ENCODE measurements at regions of chr3 and their contacts with region 1.

Region 1: GRCh38 chr3:42581709-42582473 is at the start of gene SEC22C:
- DNase-seq: peak; percentile 98
- ATAC-seq: peak; percentile 94
- H3K4me3 Mint-ChIP-seq: peak within 1 kb of the TSS; percentile 81
- H3K27ac Mint-ChIP-seq: peak within 1 kb of the TSS; percentile 94
- H3K4me1 Mint-ChIP-seq: peaks cover 43% of the 10 kb centered on the region
- H3K27me3 Mint-ChIP-seq: no peaks in the 10 kb centered on the region
- total RNA-seq, gene SEC22C: 34.2 to 42.5 TPM

Region 2: GRCh38 chr3:40800343-40800742 is 1781.5 kb before region 1 on chr3:
- CTCF ChIA-PET with region 1: no interaction called
- POLR2A ChIA-PET with region 1: no interaction called
- intact Hi-C with region 1: no loop called
- DNase-seq: no peak
- ATAC-seq: no peak
- H3K4me3 Mint-ChIP-seq: no peak overlapping the region
- H3K27ac Mint-ChIP-seq: no peak overlapping the region
- H3K4me1 Mint-ChIP-seq: no peaks in the 10 kb centered on the region
- H3K27me3 Mint-ChIP-seq: peaks cover 15% of the 10 kb centered on the region

Region 3: GRCh38 chr3:42345811-42346210 is 236.1 kb before region 1 on chr3:
- CTCF ChIA-PET with region 1: no interaction called
- POLR2A ChIA-PET with region 1: no interaction called
- intact Hi-C with region 1: no loop called
- DNase-seq: peak; percentile 31
- ATAC-seq: peak; percentile 39
- H3K4me3 Mint-ChIP-seq: no peak overlapping the region
- H3K27ac Mint-ChIP-seq: no peak overlapping the region
- H3K4me1 Mint-ChIP-seq: peaks cover 25% of the 10 kb centered on the region
- H3K27me3 Mint-ChIP-seq: no peaks in the 10 kb centered on the region

Region 4: GRCh38 chr3:42539869-42540714 is 41.8 kb before region 1 on chr3:
- CTCF ChIA-PET with region 1: no interaction called
- POLR2A ChIA-PET with region 1: no interaction called
- intact Hi-C with region 1: no loop called
- DNase-seq: peak; percentile 78
- ATAC-seq: peak; percentile 73
- H3K4me3 Mint-ChIP-seq: no peak overlapping the region
- H3K27ac Mint-ChIP-seq: no peak overlapping the region
- H3K4me1 Mint-ChIP-seq: peaks cover 4% of the 10 kb centered on the region
- H3K27me3 Mint-ChIP-seq: no peaks in the 10 kb centered on the region

Region 5: DNA sequence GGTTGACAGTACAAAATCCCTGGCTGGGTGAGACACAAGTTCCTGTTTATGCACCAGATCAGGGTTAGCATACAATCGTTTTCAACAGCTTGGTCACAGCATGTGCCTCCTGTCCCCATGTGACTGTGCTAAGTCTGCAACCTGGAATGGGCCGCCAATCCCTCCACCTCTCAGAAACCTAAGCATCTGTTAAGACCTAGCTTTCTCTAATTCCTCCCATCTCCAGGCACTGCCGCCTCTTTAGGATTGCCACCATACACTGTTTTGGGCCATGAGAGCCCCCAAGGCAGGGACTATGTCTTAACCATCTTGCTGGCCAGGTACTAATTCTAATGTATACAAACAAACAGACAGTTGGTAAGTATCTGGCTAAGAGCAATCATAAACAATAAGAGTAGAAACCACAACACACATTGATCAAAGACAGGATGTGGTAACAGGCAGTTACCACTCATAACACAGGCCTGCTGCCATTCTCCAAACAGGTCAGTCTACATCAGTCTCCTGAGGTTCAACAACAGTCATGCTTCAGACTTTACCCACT is 25.7 kb before region 1 on chr3:
- CTCF ChIA-PET with region 1: interaction called, 4 read pairs
- POLR2A ChIA-PET with region 1: no interaction called
- intact Hi-C with region 1: loop called in 1 of 2 experiments (anchors 1 kb)
- DNase-seq: peak; percentile 45
- ATAC-seq: peak; percentile 98
- H3K4me3 Mint-ChIP-seq: peak overlapping the region; percentile 22
- H3K27ac Mint-ChIP-seq: peak overlapping the region; percentile 86
- H3K4me1 Mint-ChIP-seq: peaks cover 32% of the 10 kb centered on the region
- H3K27me3 Mint-ChIP-seq: no peaks in the 10 kb centered on the region

Region 6: DNA sequence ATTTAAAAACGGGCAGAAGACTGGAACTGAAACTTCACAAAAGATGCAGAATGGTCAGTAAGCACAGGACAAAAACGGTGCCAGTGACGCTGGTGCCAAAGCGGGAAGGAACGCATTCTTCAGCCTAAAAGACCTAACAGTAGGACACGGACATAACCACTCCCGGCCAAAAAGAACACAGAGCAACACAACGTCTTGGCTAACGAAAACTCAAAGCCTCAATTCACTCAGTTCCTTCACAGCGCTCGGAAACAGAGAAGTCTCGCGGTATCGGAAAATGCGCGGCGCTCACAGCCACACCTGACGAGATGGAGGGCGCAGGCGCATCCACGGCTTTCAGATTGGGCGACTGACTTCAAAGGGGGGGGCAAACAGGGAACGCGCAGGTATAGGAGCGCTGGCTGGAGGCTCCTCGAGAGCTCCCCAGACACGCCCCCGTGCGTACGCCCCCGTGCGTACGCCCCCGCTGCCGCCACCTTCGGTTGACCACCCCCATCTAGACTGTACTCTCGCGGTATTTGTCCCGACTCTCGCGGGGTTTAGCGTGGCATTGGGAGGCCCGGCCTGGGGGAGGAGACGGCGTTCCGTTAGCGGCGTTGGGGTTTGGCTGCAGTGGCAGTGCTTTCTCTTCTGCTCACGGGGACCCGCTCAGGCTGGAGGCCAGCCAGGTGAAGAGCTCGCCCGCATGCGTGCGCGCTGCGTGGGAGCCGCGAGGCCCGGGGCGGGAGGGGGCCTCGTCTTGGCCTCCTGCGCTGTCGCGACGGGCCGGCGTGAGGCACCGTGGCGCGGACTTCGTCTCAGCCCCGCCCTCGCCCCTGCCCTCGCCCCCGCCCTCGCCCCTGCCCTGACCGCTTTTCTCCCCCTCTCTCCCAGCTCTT is 18.5 kb after region 1 on chr3 and contains the start of gene NKTR:
- CTCF ChIA-PET with region 1: interaction called, 24 read pairs
- POLR2A ChIA-PET with region 1: interaction called, 6 read pairs
- intact Hi-C with region 1: loop called (anchors 1 kb)
- DNase-seq: peak; percentile 100
- ATAC-seq: peak; percentile 91
- H3K4me3 Mint-ChIP-seq: peak within 1 kb of the TSS; percentile 80
- H3K27ac Mint-ChIP-seq: peak within 1 kb of the TSS; percentile 95
- H3K4me1 Mint-ChIP-seq: peaks cover 33% of the 10 kb centered on the region
- H3K27me3 Mint-ChIP-seq: no peaks in the 10 kb centered on the region
- total RNA-seq, gene NKTR: 50.8 to 59.2 TPM

Region 7: GRCh38 chr3:42613462-42613861 is 31.6 kb after region 1 on chr3:
- CTCF ChIA-PET with region 1: interaction called, 13 read pairs
- POLR2A ChIA-PET with region 1: interaction called, 7 read pairs
- intact Hi-C with region 1: no loop called
- DNase-seq: no peak
- ATAC-seq: peak; percentile 49
- H3K4me3 Mint-ChIP-seq: no peak overlapping the region
- H3K27ac Mint-ChIP-seq: peak overlapping the region; percentile 1
- H3K4me1 Mint-ChIP-seq: peaks cover 63% of the 10 kb centered on the region
- H3K27me3 Mint-ChIP-seq: no peaks in the 10 kb centered on the region

Region 8: GRCh38 chr3:42749753-42750231 is 167.9 kb after region 1 on chr3:
- CTCF ChIA-PET with region 1: interaction called, 6 read pairs
- POLR2A ChIA-PET with region 1: no interaction called
- intact Hi-C with region 1: loop called (anchors 1 kb)
- DNase-seq: peak; percentile 33
- ATAC-seq: peak; percentile 55
- H3K4me3 Mint-ChIP-seq: no peak overlapping the region
- H3K27ac Mint-ChIP-seq: no peak overlapping the region
- H3K4me1 Mint-ChIP-seq: peaks cover 30% of the 10 kb centered on the region
- H3K27me3 Mint-ChIP-seq: no peaks in the 10 kb centered on the region

Region 9: GRCh38 chr3:42772670-42773408 is 190.9 kb after region 1 on chr3 and contains the start of gene CCDC13:
- CTCF ChIA-PET with region 1: no interaction called
- POLR2A ChIA-PET with region 1: no interaction called
- intact Hi-C with region 1: loop called in 1 of 2 experiments (anchors 2 kb)
- DNase-seq: peak; percentile 96
- ATAC-seq: peak; percentile 96
- H3K4me3 Mint-ChIP-seq: peak within 1 kb of the TSS; percentile 83
- H3K27ac Mint-ChIP-seq: peak within 1 kb of the TSS; percentile 82
- H3K4me1 Mint-ChIP-seq: peaks cover 12% of the 10 kb centered on the region
- H3K27me3 Mint-ChIP-seq: no peaks in the 10 kb centered on the region
- total RNA-seq, gene CCDC13: 0.46 to 0.63 TPM

Region 10: GRCh38 chr3:42880601-42881451 is 298.9 kb after region 1 on chr3:
- CTCF ChIA-PET with region 1: no interaction called
- POLR2A ChIA-PET with region 1: no interaction called
- intact Hi-C with region 1: loop called in 1 of 2 experiments (anchors 1 kb)
- DNase-seq: peak; percentile 95
- ATAC-seq: peak; percentile 99
- H3K4me3 Mint-ChIP-seq: peak overlapping the region; percentile 66
- H3K27ac Mint-ChIP-seq: peak overlapping the region; percentile 82
- H3K4me1 Mint-ChIP-seq: peaks cover 7% of the 10 kb centered on the region
- H3K27me3 Mint-ChIP-seq: no peaks in the 10 kb centered on the region